HCT116 (cell line): ENCODE measurements at regions of chr15 and their contacts with region 1.

Region 1: GRCh38 chr15:85402195-85402881 is 21.9 kb downstream of the AKAP13 start:
- DNase-seq: no peak
- ATAC-seq: no peak
- H3K4me3 ChIP-seq: no peak overlapping the region
- H3K27ac ChIP-seq: no peak overlapping the region
- H3K4me1 ChIP-seq: peaks cover 19 to 41% of the 10 kb centered on the region in 2 experiments
- H3K27me3 ChIP-seq: no peaks in the 10 kb centered on the region
- CTCF ChIP-seq: no peak
- POLR2A ChIP-seq: no peak
- RAD21 ChIP-seq: no peak

Region 2: DNA sequence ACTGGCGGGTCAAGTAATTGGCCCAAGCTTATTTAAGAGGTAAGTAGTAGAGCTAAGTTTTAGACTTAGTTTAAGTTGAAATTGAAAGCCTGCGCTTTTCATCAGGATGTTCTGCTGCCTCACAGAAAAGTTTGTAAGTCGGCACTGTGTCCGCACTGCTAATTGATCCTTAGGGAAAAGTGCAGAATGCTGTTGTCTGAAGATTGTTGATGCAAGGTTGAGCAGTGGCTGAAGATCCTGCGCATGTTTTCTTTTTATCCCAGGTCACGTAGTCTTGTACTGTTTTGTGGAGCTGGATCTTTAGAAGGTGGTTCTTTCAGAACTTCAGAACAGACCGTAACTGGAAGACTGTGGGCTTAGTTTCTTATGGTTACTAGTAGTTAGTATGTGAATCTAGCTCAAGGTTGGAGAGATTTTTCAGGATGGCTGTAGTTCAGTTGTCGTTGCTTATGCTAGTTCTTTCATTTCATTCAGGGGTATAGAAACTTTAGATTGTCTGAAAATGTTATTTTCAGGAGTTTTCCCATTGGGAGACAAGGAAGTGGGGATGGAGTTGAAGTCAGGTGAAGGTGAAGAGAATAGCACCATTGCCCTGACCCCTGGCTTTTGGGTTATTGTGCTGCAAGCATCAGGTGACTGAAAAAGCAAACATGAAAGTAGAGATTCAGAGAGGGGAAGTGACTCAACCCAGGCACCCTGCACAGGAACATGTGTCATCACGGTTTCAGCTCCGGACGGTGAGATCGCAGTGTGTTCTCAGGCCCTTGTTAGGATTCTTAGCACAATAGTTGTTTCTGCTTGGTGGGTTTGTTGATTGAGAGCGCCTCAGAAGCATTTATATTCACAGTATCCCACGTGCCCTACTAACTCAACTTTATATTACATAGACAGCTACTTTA is 10.9 kb after region 1 on chr15:
- CTCF ChIA-PET with region 1: interaction called, 5 read pairs
- POLR2A ChIA-PET with region 1: interaction called, 10 read pairs
- RAD21 ChIA-PET with region 1: no interaction called
- intact Hi-C with region 1: no loop called
- DNase-seq: peak; percentile 88
- ATAC-seq: peak; percentile 98
- H3K4me3 ChIP-seq: peak overlapping the region; percentile 7 to 18; a peak in 3 of 4 replicates
- H3K27ac ChIP-seq: peak overlapping the region; percentile 69
- H3K4me1 ChIP-seq: peaks cover 36 to 58% of the 10 kb centered on the region in 2 experiments
- H3K27me3 ChIP-seq: no peaks in the 10 kb centered on the region
- CTCF ChIP-seq: 0 out of 6 replicates have a peak, but pooled peaks of 1 of the 3 experiments have one; percentile 31
- POLR2A ChIP-seq: no peak
- RAD21 ChIP-seq: peak; percentile 25; the same call in 1 of the 2 replicates